ENCODE measurements at regions of chr1 and their contacts with region 1.

Region 1: GRCh38 chr1:225441314-225442122 is 13.7 kb upstream of the LBR start:
- DNase-seq: peak; percentile 68
- H3K4me3 ChIP-seq: peak overlapping the region; percentile 26
- H3K27ac ChIP-seq: peak overlapping the region; percentile 84
- H3K4me1 ChIP-seq: peaks cover 94% of the 10 kb centered on the region
- CTCF ChIP-seq: peak; percentile 96

Region 2: DNA sequence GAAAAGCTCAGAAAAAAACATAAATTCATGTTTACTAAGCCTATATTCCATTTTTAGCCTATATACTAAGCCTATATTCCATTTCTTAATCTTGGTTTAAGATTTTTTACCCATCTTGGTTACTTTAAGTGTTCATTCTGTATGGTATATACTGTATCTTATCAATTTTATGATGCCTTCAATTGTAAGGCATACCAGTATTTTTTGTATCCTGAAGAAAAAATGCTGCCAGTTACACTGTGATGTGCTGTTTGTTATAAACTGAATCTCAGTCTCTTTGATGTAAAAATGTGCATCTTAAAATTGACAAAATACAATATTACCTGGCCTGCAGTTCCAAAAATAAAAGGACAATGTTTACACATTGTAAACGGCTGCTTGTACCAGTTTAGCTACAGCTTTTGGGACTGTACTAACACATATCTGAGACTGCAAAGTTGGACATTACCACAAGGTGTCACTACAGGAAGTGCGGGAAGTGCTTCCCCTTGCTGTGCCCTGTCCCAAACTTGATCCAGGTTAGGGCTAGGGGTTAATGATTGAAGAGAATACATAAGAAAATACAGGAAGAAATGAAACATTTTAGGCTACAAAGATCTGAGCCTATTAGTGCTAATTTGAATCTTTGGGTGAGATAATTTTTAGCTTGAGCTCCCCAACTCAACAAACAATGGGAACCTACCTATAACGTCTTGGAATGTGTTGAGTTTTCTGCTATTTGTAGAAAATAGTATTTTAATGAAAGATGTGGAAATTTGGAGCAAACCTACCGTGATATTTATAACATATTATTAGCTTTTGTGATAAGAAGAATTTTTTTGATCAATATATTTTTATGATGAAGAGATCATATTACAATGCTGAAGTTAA is 122.6 kb before region 1 on chr1:
- CTCF ChIA-PET with region 1: no interaction called
- POLR2A ChIA-PET with region 1: interaction called, 5 read pairs
- intact Hi-C with region 1: loop called (anchors 2 kb)
- DNase-seq: peak; percentile 66
- H3K4me3 ChIP-seq: no peak overlapping the region
- H3K27ac ChIP-seq: no peak overlapping the region
- H3K4me1 ChIP-seq: no peaks in the 10 kb centered on the region
- CTCF ChIP-seq: peak; percentile 94

Region 3: GRCh38 chr1:225354906-225355305 is 86.6 kb before region 1 on chr1:
- CTCF ChIA-PET with region 1: no interaction called
- POLR2A ChIA-PET with region 1: no interaction called
- intact Hi-C with region 1: no loop called
- DNase-seq: no peak
- H3K4me3 ChIP-seq: no peak overlapping the region
- H3K27ac ChIP-seq: no peak overlapping the region
- H3K4me1 ChIP-seq: no peaks in the 10 kb centered on the region
- CTCF ChIP-seq: no peak

Region 4: DNA sequence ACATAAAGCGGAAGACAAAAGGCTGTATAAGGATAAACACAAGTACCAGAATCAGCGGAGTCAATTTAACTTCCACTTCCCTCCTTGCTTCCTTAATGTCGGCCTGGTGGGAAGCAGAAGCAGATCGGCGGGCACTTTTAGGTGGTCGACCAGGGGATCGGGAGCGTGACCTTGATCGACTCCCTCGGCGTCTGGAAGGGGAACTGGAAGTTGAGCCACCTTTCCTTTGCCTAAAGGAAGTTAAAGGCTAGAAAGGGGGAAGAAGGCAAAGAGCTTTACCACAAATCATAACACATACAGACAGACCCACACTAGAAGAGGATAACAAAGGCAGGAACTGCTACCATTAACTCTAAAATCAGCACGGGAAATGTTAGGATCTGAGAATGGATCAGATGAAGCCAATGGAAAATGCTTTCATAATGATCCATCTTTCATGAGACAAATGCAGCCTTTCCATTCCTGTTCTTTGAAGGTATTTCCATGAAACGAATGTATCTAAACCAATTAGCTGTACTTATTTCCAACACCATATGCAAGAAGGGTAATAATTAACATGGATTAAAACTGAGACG is 19.4 kb before region 1 on chr1:
- CTCF ChIA-PET with region 1: interaction called, 3 read pairs
- POLR2A ChIA-PET with region 1: interaction called, 242 read pairs
- intact Hi-C with region 1: no loop called
- DNase-seq: no peak
- H3K4me3 ChIP-seq: no peak overlapping the region
- H3K27ac ChIP-seq: no peak overlapping the region
- H3K4me1 ChIP-seq: peaks cover 33% of the 10 kb centered on the region
- CTCF ChIP-seq: no peak

Region 5: GRCh38 chr1:225539069-225539468 is 97.6 kb after region 1 on chr1:
- CTCF ChIA-PET with region 1: no interaction called
- POLR2A ChIA-PET with region 1: no interaction called
- intact Hi-C with region 1: no loop called
- DNase-seq: no peak
- H3K4me3 ChIP-seq: no peak overlapping the region
- H3K27ac ChIP-seq: no peak overlapping the region
- H3K4me1 ChIP-seq: peaks cover 24% of the 10 kb centered on the region
- CTCF ChIP-seq: no peak

Region 6: GRCh38 chr1:225554216-225554812 is 112.8 kb after region 1 on chr1:
- CTCF ChIA-PET with region 1: no interaction called
- POLR2A ChIA-PET with region 1: no interaction called
- intact Hi-C with region 1: no loop called
- DNase-seq: peak; percentile 56
- H3K4me3 ChIP-seq: no peak overlapping the region
- H3K27ac ChIP-seq: no peak overlapping the region
- H3K4me1 ChIP-seq: no peaks in the 10 kb centered on the region
- CTCF ChIP-seq: peak; percentile 94